Right ventricle myocardium superior (tissue), 1 donor: ENCODE measurements at regions of chr11 and their contacts with region 1.

Region 1: GRCh38 chr11:35617687-35618496 is at the start of gene FJX1:
- DNase-seq: peak; percentile 66
- ATAC-seq: peak; percentile 73
- total RNA-seq, gene FJX1: 0.65 TPM

Region 2: GRCh38 chr11:35822815-35823495 is 205.1 kb after region 1 on chr11:
- intact Hi-C with region 1: loop called (anchors 10 kb)
- DNase-seq: no peak
- ATAC-seq: no peak

Region 3: GRCh38 chr11:36023922-36024321 is 406.0 kb after region 1 on chr11:
- intact Hi-C with region 1: loop called (anchors 10 kb)
- DNase-seq: no peak
- ATAC-seq: no peak

Region 4: GRCh38 chr11:36265793-36266628 is 648.1 kb after region 1 on chr11:
- intact Hi-C with region 1: loop called (anchors 5 kb)
- DNase-seq: peak; percentile 65
- ATAC-seq: peak; percentile 79